CD4-positive, alpha-beta T cell (primary cell): ENCODE measurements at regions of chr9 and their contacts with region 1.

Region 1: DNA sequence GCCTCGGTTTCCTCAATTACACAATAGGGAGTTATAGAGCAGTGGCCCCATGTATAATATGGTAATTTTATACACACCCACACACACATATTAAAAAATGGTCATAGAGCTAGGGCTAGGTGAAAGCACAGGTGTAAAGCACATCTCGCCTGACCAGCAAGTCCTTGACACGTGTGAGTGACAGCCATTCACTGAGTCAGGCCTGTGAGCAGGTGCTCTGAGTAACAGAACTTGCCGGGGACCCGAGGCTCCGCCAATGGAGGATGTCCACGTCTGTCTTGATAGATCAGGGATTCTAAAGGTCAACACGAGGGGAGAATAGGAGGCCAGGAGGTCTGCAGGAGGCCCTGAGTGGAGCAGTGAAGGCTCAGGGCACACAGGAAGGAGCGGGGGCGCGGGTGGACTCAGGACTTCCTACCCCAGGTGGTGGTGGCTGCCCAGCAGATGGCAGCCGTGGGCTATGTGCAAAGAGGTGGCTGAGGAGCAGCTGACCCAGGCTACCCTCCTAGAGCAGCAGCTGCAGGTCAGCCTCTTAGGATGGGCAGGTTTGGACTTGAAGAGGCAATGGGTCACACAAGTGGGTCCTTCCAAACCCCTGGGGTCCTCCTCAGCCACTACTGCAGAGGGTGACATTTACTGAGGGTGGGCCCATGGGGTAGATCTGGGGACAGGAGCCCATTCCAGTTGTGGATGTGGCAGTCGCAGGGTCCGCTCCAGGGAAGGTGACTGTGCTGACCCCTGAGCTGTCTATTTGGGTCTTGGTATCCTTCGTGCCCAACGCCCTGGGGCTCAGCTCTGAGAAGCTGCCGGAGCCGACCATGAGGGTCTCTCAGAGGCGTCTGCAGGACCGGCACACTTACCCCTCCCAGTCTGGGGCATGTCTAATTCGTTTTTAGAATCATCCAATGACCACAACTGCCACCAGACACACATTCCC is 45.9 kb downstream of the PRRT1B start:
- DNase-seq: peak; percentile 64 to 87 (median 74)
- ATAC-seq: peak; percentile 89
- H3K4me3 ChIP-seq: no peak overlapping the region
- H3K4me3 Mint-ChIP-seq: no peak overlapping the region
- H3K27ac ChIP-seq: peak overlapping the region; percentile 4 to 34
- H3K27ac Mint-ChIP-seq: peak overlapping the region; percentile 78
- H3K4me1 ChIP-seq: peaks cover 25% of the 10 kb centered on the region
- H3K4me1 Mint-ChIP-seq: peaks cover 29% of the 10 kb centered on the region
- H3K27me3 ChIP-seq: no peaks in the 10 kb centered on the region
- H3K27me3 Mint-ChIP-seq: no peaks in the 10 kb centered on the region
- CTCF ChIP-seq: peak; percentile 83

Region 2: DNA sequence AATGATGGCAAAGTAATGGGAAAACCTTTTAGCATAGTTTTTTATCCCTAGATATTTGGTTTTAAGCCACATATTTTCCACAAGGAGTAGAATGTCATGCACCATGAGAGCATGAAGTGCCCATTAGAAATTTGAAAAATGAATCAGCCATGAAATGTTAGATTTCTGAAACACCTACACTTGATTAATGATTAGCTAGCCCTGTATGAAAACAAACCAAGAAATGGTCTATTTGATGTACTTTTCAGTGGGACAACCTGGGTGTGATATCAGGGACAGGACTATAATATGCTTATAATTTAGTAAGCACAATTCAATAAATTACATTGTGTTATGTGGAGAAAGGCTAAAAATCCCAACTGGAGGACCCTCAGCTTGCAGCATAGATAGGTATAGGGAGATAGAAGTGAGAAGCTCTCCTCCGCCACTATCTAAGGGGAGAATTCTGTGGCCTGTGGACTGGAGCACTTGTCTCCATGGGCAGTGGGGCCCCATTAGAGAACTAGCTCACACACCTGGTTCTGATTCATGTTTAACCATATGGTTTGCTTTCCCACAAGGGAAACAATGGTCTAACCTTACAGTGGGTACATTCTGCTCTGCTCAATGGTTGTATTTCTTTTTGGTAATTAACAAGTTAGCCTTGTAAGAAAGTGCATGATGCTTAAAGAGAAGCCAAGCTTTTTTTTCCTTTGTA is 430.6 kb before region 1 on chr9:
- CTCF ChIA-PET with region 1: no interaction called
- POLR2A ChIA-PET with region 1: no interaction called
- intact Hi-C with region 1: no loop called
- DNase-seq: no peak
- ATAC-seq: no peak
- H3K4me3 ChIP-seq: no peak overlapping the region
- H3K4me3 Mint-ChIP-seq: no peak overlapping the region
- H3K27ac ChIP-seq: no peak overlapping the region
- H3K27ac Mint-ChIP-seq: no peak overlapping the region
- H3K4me1 ChIP-seq: no peaks in the 10 kb centered on the region
- H3K4me1 Mint-ChIP-seq: peaks cover 7% of the 10 kb centered on the region
- H3K27me3 ChIP-seq: no peaks in the 10 kb centered on the region
- H3K27me3 Mint-ChIP-seq: no peaks in the 10 kb centered on the region
- CTCF ChIP-seq: no peak

Region 3: DNA sequence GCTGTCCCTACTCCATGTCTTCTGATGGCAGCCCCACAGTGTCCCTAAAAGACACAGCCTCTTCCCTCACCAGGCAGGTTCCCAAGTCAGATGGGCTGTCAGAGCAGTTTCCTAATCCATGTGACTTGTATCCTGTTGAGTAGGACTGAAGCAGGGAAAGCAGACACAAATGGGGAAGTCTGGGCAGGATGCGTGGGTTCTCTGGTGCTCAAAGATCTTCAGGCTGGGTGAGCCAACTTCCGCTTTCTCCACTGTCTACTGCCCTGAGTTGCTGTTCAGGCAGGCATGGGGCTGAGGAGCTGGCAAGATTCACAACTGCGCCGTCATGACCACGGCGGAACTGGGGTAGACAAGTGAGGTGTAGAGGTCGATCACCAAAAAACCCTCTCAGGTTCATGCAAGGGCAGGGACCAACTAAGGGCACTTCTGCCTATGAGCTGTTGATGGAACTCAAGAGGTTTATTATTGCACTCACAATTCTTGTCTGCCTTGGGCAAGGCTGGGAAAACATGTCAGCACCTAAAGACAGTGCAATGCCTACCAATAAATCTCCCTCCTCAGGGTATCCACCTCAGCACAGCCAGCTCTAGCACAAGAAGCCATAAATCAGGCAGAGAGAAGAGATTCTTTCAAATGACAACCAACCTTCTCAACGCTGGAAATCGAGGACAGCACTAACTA is 65.3 kb after region 1 on chr9:
- CTCF ChIA-PET with region 1: interaction called, 3 read pairs
- POLR2A ChIA-PET with region 1: no interaction called
- intact Hi-C with region 1: loop called in 1 of 2 experiments (anchors 5 kb)
- DNase-seq: peak; percentile 58 to 92 (median 74)
- ATAC-seq: peak; percentile 81
- H3K4me3 ChIP-seq: no peak overlapping the region
- H3K4me3 Mint-ChIP-seq: peak overlapping the region; percentile 32
- H3K27ac ChIP-seq: peak overlapping the region; percentile 71 to 76
- H3K27ac Mint-ChIP-seq: peak overlapping the region; percentile 94
- H3K4me1 ChIP-seq: peaks cover 69% of the 10 kb centered on the region
- H3K4me1 Mint-ChIP-seq: peaks cover 73% of the 10 kb centered on the region
- H3K27me3 ChIP-seq: no peaks in the 10 kb centered on the region
- H3K27me3 Mint-ChIP-seq: no peaks in the 10 kb centered on the region
- CTCF ChIP-seq: no peak

Region 4: GRCh38 chr9:131739980-131740648 is 148.9 kb after region 1 on chr9 and contains the start of gene RAPGEF1:
- CTCF ChIA-PET with region 1: interaction called, 11 read pairs
- POLR2A ChIA-PET with region 1: interaction called, 7 read pairs
- intact Hi-C with region 1: loop called in 1 of 2 experiments (anchors 1 kb)
- DNase-seq: peak; percentile 57 to 91 (median 84)
- ATAC-seq: peak; percentile 57
- H3K4me3 ChIP-seq: peak within 1 kb of the TSS; percentile 85
- H3K4me3 Mint-ChIP-seq: peak within 1 kb of the TSS; percentile 95
- H3K27ac ChIP-seq: peak within 1 kb of the TSS; percentile 24
- H3K27ac Mint-ChIP-seq: peak within 1 kb of the TSS; percentile 92
- H3K4me1 ChIP-seq: peaks cover 69% of the 10 kb centered on the region
- H3K4me1 Mint-ChIP-seq: peaks cover 62% of the 10 kb centered on the region
- H3K27me3 ChIP-seq: no peaks in the 10 kb centered on the region
- H3K27me3 Mint-ChIP-seq: no peaks in the 10 kb centered on the region
- CTCF ChIP-seq: peak; percentile 66
- total RNA-seq, gene RAPGEF1: 130 to 134 TPM

Region 5: GRCh38 chr9:131747356-131747755 is 156.2 kb after region 1 on chr9:
- CTCF ChIA-PET with region 1: interaction called, 11 read pairs
- POLR2A ChIA-PET with region 1: interaction called, 7 read pairs
- intact Hi-C with region 1: loop called (anchors 1 kb)
- DNase-seq: peak in 5 of 14 experiments; percentile 13 to 78 (median 65)
- ATAC-seq: peak; percentile 30
- H3K4me3 ChIP-seq: no peak overlapping the region
- H3K4me3 Mint-ChIP-seq: no peak overlapping the region
- H3K27ac ChIP-seq: no peak overlapping the region
- H3K27ac Mint-ChIP-seq: peak overlapping the region; percentile 47
- H3K4me1 ChIP-seq: peaks cover 25% of the 10 kb centered on the region
- H3K4me1 Mint-ChIP-seq: peaks cover 32% of the 10 kb centered on the region
- H3K27me3 ChIP-seq: no peaks in the 10 kb centered on the region
- H3K27me3 Mint-ChIP-seq: no peaks in the 10 kb centered on the region
- CTCF ChIP-seq: peak; percentile 66